ENCODE measurements at regions of chr7 and their contacts with region 1.

Region 1: GRCh38 chr7:43729214-43729923 is at the start of gene COA1:
- DNase-seq: peak; percentile 89
- H3K4me3 ChIP-seq: peak within 1 kb of the TSS; percentile 80
- H3K27ac ChIP-seq: peak within 1 kb of the TSS; percentile 41
- H3K4me1 ChIP-seq: peaks cover 19% of the 10 kb centered on the region
- CTCF ChIP-seq: peak; percentile 29; the same call in 1 of the 2 replicates
- total RNA-seq, gene COA1: 96.0 and 96.9 TPM in 2 replicates

Region 2: GRCh38 chr7:43454936-43455518 is 274.3 kb before region 1 on chr7:
- CTCF ChIA-PET with region 1: no interaction called
- POLR2A ChIA-PET with region 1: interaction called, 3 read pairs
- intact Hi-C with region 1: loop called (anchors 10 kb)
- DNase-seq: peak; percentile 46
- H3K4me3 ChIP-seq: no peak overlapping the region
- H3K27ac ChIP-seq: no peak overlapping the region
- H3K4me1 ChIP-seq: no peaks in the 10 kb centered on the region
- CTCF ChIP-seq: peak; percentile 82

Region 3: GRCh38 chr7:43625453-43625852 is 103.9 kb before region 1 on chr7:
- CTCF ChIA-PET with region 1: no interaction called
- POLR2A ChIA-PET with region 1: no interaction called
- intact Hi-C with region 1: no loop called
- DNase-seq: peak; percentile 71
- H3K4me3 ChIP-seq: peak overlapping the region; percentile 4
- H3K27ac ChIP-seq: peak overlapping the region; percentile 31
- H3K4me1 ChIP-seq: peaks cover 44% of the 10 kb centered on the region
- CTCF ChIP-seq: no peak

Region 4: DNA sequence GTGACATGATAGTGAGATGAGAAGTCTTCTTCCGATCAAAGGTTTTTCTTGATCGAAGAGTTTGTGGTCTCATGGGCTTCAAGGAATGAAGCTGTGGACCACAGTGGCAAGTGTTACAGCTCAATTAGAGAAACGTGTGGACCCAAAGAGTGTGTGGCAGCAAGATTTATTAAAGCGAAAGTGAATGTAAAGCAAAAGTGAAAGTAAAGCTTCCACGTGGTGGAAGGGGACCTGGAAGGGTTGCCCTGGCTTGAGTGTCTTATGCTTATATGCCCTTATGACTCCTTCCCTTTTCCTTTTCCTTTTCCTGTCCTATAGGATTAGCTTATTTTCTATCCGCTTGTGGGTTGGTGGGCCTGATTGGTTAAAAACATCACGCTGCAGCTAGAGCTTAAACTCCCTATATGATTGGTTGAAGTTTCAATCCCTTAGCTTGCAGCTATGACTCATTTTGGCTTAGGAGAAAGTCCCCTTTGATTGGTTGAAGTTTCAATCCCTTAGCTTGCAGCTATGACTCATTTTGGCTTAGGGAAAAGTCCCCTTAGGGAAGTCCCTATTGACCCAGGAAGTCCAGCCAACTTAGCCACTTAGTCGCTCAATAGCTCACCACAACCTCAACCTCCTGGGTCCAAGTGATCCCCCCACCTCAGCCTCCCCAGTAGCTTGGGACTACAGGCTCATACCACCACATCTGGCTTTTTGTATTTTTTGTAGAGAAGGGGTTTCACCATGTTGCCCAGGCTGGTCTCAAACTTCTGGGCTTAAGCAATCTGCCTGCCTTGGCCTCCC is 105.3 kb after region 1 on chr7:
- CTCF ChIA-PET with region 1: no interaction called
- POLR2A ChIA-PET with region 1: no interaction called
- intact Hi-C with region 1: loop called (anchors 5 kb)
- DNase-seq: peak; percentile 53
- H3K4me3 ChIP-seq: peak overlapping the region; percentile 54
- H3K27ac ChIP-seq: no peak overlapping the region
- H3K4me1 ChIP-seq: peaks cover 10% of the 10 kb centered on the region
- CTCF ChIP-seq: no peak

Region 5: DNA sequence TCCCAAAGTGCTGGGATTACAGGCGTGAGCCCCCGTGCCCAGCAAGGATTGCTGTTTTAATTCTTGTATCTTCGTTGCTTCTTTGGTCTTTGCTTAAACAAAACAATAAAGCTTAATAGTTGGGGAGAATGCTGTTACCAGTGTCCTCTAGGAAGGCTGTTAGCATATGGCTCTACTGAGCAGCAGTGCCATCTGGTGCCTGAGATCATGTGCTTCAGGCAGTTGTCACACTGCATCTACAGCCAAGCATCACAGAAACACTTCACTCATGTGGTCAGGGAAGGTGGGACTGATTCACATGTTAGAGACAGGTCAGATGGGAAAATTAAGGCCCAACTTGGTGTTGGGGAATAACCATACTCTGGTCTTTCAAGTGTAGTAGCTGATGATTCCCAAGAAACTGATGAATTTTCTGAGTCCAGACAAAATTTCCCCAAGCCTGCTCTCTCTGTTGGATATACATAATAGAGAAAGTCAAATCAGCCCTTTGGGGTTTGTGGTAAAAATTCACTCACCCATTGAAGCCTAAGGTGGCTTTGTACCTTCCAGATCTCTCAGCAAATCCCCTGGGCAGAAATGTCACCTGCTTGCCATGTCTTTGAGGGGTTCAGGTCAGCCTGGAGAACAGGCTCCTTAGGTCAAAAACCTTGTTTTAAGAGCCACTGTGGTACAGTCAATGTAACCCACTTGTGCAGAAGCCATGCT is 225.3 kb after region 1 on chr7:
- CTCF ChIA-PET with region 1: no interaction called
- POLR2A ChIA-PET with region 1: no interaction called
- intact Hi-C with region 1: loop called (anchors 10 kb)
- DNase-seq: peak; percentile 68
- H3K4me3 ChIP-seq: no peak overlapping the region
- H3K27ac ChIP-seq: no peak overlapping the region
- H3K4me1 ChIP-seq: peaks cover 22% of the 10 kb centered on the region
- CTCF ChIP-seq: peak; percentile 80